Transverse colon (tissue), 4 donors: ENCODE measurements at regions of chr4 and their contacts with region 1.

Region 1: DNA sequence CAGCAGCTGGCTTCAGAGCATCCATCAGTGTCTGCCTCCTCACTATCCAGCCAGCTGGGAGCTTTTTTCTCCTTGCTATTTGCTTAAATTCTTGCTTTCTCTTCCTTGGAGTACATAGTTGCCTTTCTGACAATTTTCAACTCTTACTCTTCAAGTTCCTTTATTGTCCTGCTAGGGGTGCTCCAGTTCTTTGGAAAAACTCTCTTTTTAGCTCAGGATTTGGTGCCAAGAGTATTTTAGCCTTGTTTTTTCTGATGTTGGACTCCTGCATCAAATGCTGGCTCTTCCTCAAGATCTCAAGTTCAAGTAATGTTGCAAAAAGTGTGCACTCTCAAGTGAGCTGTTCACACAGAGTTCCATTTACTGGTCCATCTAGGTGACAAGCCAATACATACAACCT is 126.4 kb downstream of the KDR start:
- DNase-seq: no peak
- H3K4me3 ChIP-seq: no peak overlapping the region
- H3K27ac ChIP-seq: no peak overlapping the region
- H3K4me1 ChIP-seq: no peaks in the 10 kb centered on the region
- H3K27me3 ChIP-seq: no peaks in the 10 kb centered on the region
- CTCF ChIP-seq: no peak
- EP300 ChIP-seq: no peak
- POLR2A ChIP-seq: no peak

Region 2: DNA sequence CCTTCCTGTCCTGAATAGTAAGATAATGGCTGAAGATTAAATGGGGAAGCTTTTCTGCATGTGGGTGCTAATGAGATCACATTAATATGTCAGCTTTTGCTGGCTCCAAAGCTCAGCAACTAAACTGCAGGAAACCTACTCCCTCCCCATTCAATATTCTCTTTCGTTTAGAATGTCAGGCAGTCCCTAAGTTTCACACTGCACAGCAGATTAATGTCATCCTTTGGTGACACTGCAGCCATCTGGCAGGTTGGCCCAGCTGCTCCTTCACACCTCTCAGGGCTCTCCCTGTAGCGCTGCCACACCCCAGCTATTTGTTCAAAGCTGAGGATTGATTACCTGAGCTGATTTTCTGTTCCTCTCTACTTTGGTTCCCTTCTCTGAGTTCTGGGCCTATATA is 15.9 kb after region 1 on chr4:
- in situ Hi-C with region 1: no loop called
- intact Hi-C with region 1: loop called (anchors 1 kb)
- DNase-seq: no peak
- H3K4me3 ChIP-seq: no peak overlapping the region
- H3K27ac ChIP-seq: no peak overlapping the region
- H3K4me1 ChIP-seq: no peaks in the 10 kb centered on the region
- H3K27me3 ChIP-seq: no peaks in the 10 kb centered on the region
- CTCF ChIP-seq: no peak
- EP300 ChIP-seq: no peak
- POLR2A ChIP-seq: no peak